ENCODE measurements at regions of chr3 and their contacts with region 1.

Region 1: DNA sequence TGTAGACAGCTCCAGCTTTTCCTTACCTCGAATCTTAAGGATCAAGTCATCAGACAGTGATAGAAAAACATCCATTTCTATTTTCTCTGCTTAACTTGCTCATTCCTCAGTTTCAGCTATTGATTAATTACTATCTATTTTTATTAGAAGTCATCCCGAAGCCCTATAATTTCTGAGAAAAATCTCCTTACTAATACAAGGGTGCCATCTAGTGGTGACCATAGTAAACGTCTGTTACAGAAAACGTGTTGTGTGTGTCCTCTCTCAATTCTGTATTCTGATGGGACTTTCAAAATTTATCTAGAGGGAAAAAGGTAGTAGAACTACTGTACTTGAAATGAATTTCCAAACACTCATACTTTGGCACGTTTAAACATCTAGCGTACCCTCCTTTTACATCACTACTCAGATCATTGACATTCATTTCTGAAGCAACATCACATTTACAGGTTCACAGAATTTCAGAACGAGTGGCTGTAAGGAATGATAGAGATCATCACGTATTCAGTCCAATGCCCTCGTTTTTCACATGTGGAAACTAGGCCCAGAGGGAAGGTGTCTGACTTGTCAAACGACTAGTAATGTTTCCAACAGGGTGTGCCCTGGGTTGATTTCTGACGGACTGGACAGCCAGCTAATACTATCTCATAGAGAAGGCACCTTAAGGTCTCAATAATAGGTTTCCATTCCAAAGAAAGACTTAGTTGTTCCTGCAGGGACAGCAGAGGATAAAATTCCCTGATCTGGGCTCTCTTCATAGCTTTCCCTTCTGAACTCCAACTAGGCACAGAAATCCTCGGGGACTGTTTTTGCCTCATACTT is 25.6 kb downstream of the HACD2 start:
- DNase-seq: no peak
- ATAC-seq: peak in 1 of 4 donors; percentile 60
- H3K4me3 ChIP-seq: no peak overlapping the region
- H3K27ac ChIP-seq: no peak overlapping the region
- H3K4me1 ChIP-seq: peaks cover 5% of the 10 kb centered on the region
- H3K27me3 ChIP-seq: no peaks in the 10 kb centered on the region
- CTCF ChIP-seq: peak; percentile 84

Region 2: DNA sequence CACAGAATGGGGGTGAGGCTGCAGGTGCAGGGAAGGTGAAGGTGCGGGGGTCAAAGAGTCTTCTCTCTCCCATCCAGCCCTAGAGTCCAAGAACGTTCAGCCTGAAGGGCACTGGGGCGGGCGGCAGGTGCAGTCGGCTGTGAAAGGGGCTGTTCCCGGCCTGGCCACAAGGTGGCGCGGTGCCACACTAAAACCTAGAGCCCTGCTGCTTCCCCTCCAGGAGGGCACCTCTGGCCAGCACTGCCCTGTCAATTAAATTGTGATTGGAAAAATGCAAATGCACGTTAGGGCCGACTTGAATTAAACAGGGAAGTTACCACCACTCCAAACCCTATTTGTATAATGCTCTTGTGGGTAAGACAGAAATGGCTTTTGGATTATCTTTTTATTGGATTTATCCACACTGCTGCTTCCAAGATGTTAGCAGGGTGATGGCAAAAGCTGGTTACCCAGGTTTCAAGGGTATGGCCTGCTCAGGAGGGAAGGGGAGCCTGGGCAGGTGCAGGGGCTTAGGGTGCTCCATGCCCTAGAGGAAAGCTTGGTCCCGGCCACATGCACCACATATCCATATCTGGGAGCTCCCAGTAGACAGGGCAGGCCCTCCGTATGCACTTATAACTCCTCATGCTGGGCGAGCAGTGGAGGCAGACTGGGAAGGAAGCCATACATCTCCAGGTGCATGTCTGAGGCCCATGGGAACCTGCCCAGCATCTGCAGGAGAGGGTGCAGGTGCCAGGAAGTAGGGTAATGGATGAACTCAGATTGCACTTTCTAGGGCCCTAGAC is 230.2 kb before region 1 on chr3:
- intact Hi-C with region 1: loop called (anchors 1 to 5 kb)
- DNase-seq: peak; percentile 80 to 86
- ATAC-seq: peak; percentile 87 to 95 (median 91)
- H3K4me3 ChIP-seq: no peak overlapping the region
- H3K27ac ChIP-seq: no peak overlapping the region
- H3K4me1 ChIP-seq: no peaks in the 10 kb centered on the region
- H3K27me3 ChIP-seq: no peaks in the 10 kb centered on the region
- CTCF ChIP-seq: peak; percentile 95

Region 3: DNA sequence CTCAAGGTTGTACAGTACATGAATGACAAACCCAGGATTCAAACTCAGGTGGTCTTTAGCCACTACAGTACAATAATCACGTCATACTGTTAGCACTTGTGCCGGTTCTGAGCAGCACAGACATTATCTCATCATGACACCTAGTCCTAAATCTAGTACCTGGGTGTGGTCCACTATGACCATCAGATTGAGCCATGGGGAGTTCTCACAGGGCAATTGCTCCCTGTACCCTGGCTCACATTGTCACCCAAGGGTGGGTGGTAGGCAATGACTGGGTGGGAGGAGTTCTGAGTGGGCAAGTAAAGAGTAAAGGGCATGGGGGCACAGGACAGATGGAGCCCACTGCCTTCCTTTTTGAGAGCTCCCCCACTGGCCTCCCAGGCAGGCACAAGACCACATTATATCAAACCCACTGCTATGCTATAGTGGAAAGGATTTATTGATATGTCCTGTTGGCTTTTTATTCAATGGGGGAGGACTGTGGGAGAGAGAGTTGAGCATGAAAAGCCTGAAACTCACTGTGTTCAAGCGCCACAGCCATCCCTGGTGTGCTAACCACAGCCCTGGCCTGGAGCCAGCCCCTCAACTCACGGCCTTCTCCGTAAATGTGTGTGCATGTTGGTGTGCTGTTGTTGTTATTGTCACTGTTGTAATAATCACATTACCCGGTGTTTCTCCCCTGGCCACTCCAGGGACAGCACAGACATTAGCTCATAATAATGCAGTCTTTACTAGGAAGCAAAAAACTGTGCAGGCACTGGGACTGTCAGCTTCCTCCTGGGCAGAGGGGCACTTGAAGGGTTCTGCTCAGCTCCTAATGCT is 137.7 kb before region 1 on chr3:
- intact Hi-C with region 1: no loop called
- DNase-seq: peak; percentile 27 to 69
- ATAC-seq: no peak
- H3K4me3 ChIP-seq: no peak overlapping the region
- H3K27ac ChIP-seq: no peak overlapping the region
- H3K4me1 ChIP-seq: no peaks in the 10 kb centered on the region
- H3K27me3 ChIP-seq: no peaks in the 10 kb centered on the region
- CTCF ChIP-seq: no peak

Region 4: DNA sequence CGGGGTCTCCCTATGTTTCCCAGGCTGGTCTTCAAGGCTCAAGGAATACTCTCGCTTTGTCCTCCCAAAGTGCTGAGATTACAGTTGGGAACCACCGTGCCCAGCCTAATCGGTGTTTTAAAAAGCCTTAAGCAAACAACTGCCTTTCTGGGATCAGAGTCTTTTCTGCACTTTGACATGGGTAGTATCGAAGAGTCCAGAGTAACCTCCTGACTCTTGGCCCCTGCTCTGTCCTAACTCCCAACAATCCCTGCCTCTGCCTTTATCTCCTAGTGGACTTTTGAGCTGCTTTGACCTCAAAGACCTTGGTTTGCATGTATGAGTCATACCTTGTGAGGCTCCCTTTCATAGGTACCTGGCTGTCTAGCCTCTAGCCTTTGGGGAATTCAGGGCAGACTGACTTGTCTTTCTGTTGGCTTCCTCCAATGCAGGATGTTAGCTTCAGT is 46.6 kb after region 1 on chr3:
- intact Hi-C with region 1: no loop called
- DNase-seq: no peak
- ATAC-seq: no peak
- H3K4me3 ChIP-seq: no peak overlapping the region
- H3K27ac ChIP-seq: no peak overlapping the region
- H3K4me1 ChIP-seq: no peaks in the 10 kb centered on the region
- H3K27me3 ChIP-seq: no peaks in the 10 kb centered on the region
- CTCF ChIP-seq: no peak